ENCODE measurements at regions of chr14 and their contacts with region 1.

Region 1: DNA sequence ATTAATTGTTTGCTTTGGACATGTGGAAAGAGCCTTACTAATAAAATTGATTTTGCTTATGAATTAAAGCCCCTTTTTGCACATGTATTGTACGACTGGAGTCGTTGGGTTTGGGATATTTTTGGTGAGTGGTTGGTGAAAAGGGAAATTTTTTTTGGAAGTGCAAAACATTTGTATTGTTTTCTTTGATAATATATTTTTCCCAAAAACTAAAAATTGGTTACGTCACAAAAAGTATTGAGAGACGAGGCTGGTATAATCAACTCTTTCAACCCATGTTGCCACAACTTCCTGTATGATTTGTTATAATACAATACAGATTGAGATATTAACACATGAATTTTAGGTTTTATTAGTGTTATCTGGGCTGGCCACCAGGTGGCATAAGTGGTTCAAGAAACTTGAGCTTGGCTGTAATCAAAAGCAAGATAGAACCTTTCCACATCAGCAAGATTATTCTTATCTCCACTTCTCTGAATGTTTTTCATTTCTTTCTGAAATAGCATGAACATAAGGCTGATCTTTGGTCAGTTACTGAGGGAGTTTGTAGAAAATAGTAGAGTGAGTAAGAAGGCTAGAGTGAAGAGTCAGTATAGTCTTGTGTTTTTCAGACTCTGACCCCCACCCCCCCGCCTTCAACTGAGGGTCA is 8.7 kb downstream of the NGDN start:
- DNase-seq: peak in 3 of 5 donors; percentile 32 to 51 (median 44)
- ATAC-seq: peak in 3 of 4 donors; percentile 41 to 60 (median 47)
- H3K4me3 ChIP-seq: no peak overlapping the region
- H3K27ac ChIP-seq: no peak overlapping the region
- H3K4me1 ChIP-seq: peaks cover 0 to 6% (median 0%) of the 10 kb centered on the region in 12 donors
- H3K27me3 ChIP-seq: no peaks in the 10 kb centered on the region
- CTCF ChIP-seq: peak; percentile 48 to 80 (median 73)
- POLR2A ChIP-seq: no peak

Region 2: DNA sequence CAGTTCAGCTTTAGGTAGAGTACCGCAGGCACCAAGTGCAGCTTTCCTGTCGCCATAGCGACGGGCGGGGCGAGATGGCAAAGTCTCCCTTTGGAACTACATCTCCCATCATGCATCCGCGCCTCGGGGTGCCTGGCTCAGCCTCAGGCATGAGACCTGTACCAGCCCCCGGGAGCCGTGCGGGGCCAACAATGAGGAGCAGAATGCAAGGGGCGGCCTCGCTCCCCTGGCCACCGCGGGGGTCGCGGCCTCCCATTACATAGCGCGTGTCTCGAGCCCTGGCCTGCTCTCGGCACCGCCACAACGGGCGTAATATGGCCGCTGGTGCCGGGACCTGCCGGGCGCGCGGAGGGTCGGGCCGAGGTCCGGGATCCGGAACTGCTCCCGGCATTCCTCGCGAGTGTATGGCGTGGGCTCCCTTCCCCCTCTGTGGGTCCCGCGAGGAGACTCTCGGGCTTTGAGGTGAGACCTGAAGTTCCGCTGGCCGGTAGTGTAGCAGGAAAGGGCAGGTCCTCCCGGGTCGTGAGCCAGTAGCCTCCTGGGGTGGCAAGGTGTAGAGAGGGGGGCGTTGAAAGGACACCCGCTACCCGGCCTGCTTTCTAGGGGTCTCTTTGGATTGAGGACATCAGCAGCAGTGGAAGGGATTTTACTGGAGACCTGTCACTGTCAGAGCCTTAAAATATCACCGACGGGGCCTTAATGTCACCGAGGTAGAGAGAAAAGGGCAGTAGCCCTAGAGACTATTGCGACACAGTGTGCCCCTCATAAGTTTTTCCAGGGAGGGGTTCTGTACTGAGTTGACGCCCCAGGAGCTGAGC is 77.9 kb after region 1 on chr14 and contains the start of gene THTPA:
- intact Hi-C with region 1: loop called in 5 of 10 experiments (anchors 1 to 5 kb)
- DNase-seq: peak; percentile 93 to 97 (median 95)
- ATAC-seq: peak; percentile 86 to 96 (median 94)
- H3K4me3 ChIP-seq: peak within 1 kb of the TSS; percentile 56 to 100 (median 92)
- H3K27ac ChIP-seq: peak within 1 kb of the TSS; percentile 90 to 100 (median 97)
- H3K4me1 ChIP-seq: peaks cover 0 to 35% (median 21%) of the 10 kb centered on the region in 12 donors
- H3K27me3 ChIP-seq: no peaks in the 10 kb centered on the region
- CTCF ChIP-seq: no peak
- POLR2A ChIP-seq: peak in 1 of 2 donors; percentile 52
- total RNA-seq, gene THTPA: 13.0 to 30.9 (median 18.9) TPM

Region 3: DNA sequence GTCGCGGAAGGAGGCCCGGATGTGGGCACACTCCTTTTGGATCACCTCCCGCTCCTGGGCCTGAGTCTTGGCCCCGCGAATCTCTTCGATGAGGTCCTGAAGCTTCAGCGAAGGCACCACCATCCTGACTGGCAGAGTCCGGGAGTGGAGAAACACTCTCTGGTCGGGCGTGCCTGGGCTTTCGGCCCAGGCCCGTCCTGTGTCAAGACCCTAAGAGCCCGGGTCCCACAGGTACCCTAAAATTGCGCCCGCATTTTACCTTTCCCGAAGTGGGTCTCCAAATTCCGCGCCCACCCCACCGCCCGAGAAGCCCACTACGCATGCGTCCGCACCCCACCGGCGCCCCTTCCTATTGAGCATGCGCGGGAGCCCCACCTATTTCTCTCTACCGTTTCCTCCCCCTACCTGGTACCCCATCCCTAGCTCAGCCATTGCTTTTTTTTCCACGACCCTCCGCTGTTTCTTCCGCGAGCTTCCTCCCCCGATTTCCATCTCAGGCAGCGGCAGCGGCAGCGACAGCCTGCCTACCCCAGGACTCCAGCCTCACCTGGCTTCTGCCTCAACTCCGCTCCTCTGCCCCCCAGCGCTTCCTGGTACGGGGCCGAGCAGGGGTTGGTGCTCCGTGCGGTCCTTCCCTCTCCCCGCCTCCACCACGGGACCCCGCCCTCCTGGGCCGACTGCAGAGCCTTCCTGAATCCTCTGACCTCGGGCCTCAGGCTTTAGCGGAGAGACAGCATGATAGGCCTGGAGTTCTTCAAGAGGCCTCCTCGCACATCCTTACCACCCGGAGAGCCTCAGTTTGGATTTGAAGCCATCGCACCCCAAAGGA is 89.2 kb after region 1 on chr14 and contains the start of gene AP1G2:
- intact Hi-C with region 1: loop called in 6 of 10 experiments (anchors 1 to 5 kb)
- DNase-seq: peak; percentile 84 to 92 (median 88)
- ATAC-seq: peak; percentile 55 to 82 (median 72)
- H3K4me3 ChIP-seq: peak within 1 kb of the TSS; percentile 19 to 80 (median 66)
- H3K27ac ChIP-seq: peak within 1 kb of the TSS in 11 of 12 donors; percentile 38 to 77 (median 64)
- H3K4me1 ChIP-seq: peaks cover 0 to 40% (median 10%) of the 10 kb centered on the region in 12 donors
- H3K27me3 ChIP-seq: peaks cover 0 to 11% (median 0%) of the 10 kb centered on the region in 9 donors
- CTCF ChIP-seq: no peak
- POLR2A ChIP-seq: peak in 1 of 2 donors; percentile 39
- total RNA-seq, gene AP1G2: 7.2 to 33.8 (median 11.6) TPM